Right ventricle myocardium superior (tissue), 1 donor: ENCODE measurements at regions of chr1 and their contacts with region 1.

Region 1: GRCh38 chr1:112466078-112466660 is 42.6 kb upstream of the WNT2B start:
- DNase-seq: peak; percentile 97
- ATAC-seq: peak; percentile 95

Region 2: DNA sequence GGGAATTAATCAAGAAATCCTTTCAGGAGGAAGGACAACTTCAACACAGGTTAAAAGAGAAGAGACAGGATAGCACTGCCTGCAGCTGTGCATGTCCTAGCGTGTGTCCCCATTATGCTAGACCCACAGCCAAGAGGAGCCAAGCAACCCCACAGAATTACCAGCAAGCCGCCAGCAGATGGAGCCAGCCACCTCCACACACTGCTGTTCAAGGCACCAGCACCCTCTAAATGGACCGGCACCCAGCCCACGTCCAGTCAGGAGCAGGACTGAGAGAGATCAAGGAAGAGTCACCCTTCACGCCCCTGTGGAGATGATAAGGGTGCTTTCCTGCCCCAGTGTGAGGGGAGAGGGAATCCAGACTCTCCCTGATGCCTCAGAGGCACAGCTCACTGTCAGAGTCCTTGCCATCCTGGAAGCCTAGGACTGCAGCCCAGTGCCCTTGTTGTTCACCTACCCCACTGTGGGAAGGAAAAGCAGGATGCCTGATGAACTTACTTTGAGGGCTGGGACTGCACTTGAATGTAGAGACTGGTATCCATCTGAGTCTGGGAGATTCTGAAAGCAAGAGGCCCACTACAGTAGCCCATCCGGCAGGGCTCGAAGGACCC is 107.3 kb before region 1 on chr1:
- intact Hi-C with region 1: no loop called
- DNase-seq: peak; percentile 89
- ATAC-seq: peak; percentile 89

Region 3: DNA sequence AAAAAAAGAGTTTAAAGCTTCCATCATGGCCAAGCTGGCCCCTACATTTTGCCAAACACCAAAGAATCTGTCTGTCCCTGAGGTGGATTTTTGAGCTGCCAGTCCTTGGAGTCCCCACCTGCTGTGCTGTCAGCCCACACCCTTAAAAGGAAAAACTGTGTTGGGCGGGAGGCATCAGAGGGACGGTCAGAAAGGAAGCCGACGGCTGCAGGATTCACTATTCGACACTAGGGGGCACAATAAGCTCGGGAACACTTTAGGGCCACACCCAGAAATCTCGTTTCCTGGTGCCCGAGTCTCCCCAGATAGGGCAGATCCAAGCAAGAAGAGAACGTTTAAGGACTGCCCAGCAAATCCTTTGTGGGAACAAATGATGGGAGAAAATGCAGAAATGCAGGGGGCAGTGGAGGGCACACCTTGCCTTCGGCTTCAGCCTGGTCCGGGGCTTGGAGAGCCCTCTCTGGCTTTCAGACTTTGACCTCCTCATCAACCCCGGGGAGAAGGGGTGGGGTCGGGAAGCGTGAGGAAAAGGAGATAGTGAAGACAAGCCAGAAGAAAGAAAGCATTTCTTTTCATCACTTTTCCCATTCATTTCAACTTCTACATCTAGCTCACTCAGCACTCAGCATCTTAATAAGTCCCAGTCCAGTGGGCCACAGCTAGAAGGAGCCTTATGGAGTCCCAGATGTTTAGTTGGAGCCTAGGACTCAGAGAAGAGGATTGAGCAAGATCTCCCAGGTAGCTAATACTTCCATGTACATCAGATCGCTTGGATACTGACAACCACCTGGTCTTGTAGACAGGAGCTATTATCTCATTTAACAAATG is 75.2 kb before region 1 on chr1:
- intact Hi-C with region 1: loop called (anchors 2 kb)
- DNase-seq: peak; percentile 88
- ATAC-seq: peak; percentile 92